Naive thymus-derived CD4-positive, alpha-beta T cell (primary cell): ENCODE measurements at regions of chr12 and their contacts with region 1.

Region 1: GRCh38 chr12:29317556-29318363 is 63.2 kb downstream of the ERGIC2 start:
- DNase-seq: peak in 8 of 9 donors; percentile 22 to 73 (median 55)
- ATAC-seq: peak; percentile 100
- H3K4me3 ChIP-seq: no peak overlapping the region
- H3K4me3 Mint-ChIP-seq: no peak overlapping the region
- H3K27ac ChIP-seq: no peak overlapping the region
- H3K27ac Mint-ChIP-seq: peak overlapping the region in 1 of 9 donors; percentile 6
- H3K4me1 ChIP-seq: no peaks in the 10 kb centered on the region
- H3K4me1 Mint-ChIP-seq: peaks cover 2 to 10% (median 8%) of the 10 kb centered on the region in 7 donors
- H3K27me3 ChIP-seq: no peaks in the 10 kb centered on the region
- H3K27me3 Mint-ChIP-seq: no peaks in the 10 kb centered on the region

Region 2: GRCh38 chr12:29073628-29074239 is 244.0 kb before region 1 on chr12:
- CTCF ChIA-PET with region 1: interaction called, 40 read pairs
- POLR2A ChIA-PET with region 1: interaction called, 3 read pairs
- intact Hi-C with region 1: loop called (anchors 1 kb)
- DNase-seq: peak in 6 of 9 donors; percentile 7 to 47 (median 34)
- ATAC-seq: peak; percentile 73
- H3K4me3 ChIP-seq: no peak overlapping the region
- H3K4me3 Mint-ChIP-seq: no peak overlapping the region
- H3K27ac ChIP-seq: no peak overlapping the region
- H3K27ac Mint-ChIP-seq: peak overlapping the region in 2 of 9 donors; percentile 26 to 65
- H3K4me1 ChIP-seq: no peaks in the 10 kb centered on the region
- H3K4me1 Mint-ChIP-seq: no peaks in the 10 kb centered on the region
- H3K27me3 ChIP-seq: no peaks in the 10 kb centered on the region
- H3K27me3 Mint-ChIP-seq: peaks cover 12 to 45% (median 23%) of the 10 kb centered on the region in 5 donors

Region 3: GRCh38 chr12:29148911-29149690 is 168.7 kb before region 1 on chr12 and contains the start of gene FAR2:
- CTCF ChIA-PET with region 1: no interaction called
- POLR2A ChIA-PET with region 1: no interaction called
- intact Hi-C with region 1: loop called (anchors 2 to 10 kb)
- DNase-seq: peak; percentile 20 to 58 (median 33)
- ATAC-seq: peak; percentile 78
- H3K4me3 ChIP-seq: peak within 1 kb of the TSS; percentile 88
- H3K4me3 Mint-ChIP-seq: peak within 1 kb of the TSS; percentile 87 to 96 (median 92)
- H3K27ac ChIP-seq: peak within 1 kb of the TSS; percentile 37
- H3K27ac Mint-ChIP-seq: peak within 1 kb of the TSS; percentile 36 to 94 (median 74)
- H3K4me1 ChIP-seq: peaks cover 0 to 6% of the 10 kb centered on the region in 2 donors
- H3K4me1 Mint-ChIP-seq: peaks cover 14 to 31% (median 27%) of the 10 kb centered on the region in 7 donors
- H3K27me3 ChIP-seq: no peaks in the 10 kb centered on the region
- H3K27me3 Mint-ChIP-seq: peaks cover 0 to 64% (median 10%) of the 10 kb centered on the region in 5 donors
- total RNA-seq, gene FAR2: 1.1 to 11.1 (median 3.0) TPM